Cardiac septum (tissue), 1 donor: ENCODE measurements at regions of chr11 and their contacts with region 1.

Region 1: DNA sequence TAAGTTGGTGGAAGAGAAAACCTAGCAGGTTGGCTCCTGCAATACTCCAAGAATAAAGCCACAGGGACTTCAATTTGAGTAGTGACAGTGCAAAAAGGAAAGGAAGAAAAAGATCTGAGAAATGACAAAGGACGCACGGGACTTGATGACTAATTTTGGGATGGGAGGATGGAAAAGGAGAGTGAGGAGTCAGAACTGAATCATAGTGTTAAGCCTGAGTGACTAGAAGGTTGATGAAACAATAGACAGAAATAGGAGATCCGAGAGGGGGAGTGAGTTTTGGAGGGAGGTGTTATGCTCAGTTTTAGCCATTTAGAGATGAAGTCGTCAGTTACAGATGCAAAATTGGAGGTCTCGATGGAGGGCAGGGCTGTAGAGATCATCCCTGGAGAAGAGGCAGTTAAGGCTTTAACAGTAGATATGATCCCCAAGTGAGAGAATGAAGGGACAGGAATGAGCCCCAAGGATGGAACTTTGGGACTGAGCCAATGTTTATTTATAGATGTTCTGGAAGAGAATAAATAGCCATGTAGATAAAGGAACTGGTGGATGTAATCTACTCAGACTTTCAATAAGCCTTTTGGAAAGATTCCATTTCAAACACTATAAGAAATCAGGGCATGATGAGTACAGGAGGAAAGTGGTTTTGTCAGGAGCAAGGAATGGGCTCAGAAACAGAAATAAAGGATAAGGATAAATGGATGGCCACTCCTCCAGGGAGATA is 108.9 kb upstream of the NCAM1 start:
- DNase-seq: no peak

Region 2: DNA sequence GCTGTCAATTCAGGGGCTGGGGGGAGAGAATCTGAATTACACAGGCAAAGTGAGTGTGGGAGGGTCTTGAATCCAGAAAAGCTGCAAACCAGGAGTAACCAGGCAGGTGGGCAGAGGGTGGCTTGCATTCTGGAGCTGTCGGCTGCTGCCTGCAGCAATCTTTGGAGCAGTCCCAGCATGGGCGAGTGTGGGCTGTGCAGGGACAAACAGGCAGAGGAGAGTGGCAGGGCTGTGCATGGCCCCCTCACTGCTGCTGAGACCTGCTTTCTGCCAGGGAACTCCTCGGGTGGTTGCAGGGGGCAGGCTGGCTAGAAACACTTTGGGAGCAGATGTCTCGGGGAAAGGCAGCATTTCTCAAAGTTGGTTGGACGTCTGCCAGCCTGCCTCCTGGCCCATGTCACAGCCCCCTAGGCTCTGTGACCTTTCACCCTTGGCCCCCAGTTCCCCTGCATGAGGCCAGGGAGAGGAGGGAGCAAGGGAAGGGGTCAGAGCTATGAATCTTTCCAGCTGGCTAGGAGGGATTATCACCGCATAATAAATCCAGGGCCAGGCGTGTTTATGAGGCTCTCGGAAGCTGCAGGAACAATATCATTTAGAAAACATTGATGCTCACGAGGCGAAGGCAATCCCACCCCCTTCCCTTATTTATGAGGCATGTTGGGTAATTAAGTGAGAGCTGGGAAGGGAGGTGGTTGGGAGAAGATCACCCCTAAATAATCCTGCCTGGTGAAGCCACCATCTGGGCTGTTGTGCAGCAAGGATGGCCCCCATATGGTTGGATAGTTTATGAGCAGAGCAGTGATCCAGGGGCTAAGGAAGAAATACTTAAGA is 103.4 kb before region 1 on chr11:
- intact Hi-C with region 1: no loop called
- DNase-seq: no peak

Region 3: DNA sequence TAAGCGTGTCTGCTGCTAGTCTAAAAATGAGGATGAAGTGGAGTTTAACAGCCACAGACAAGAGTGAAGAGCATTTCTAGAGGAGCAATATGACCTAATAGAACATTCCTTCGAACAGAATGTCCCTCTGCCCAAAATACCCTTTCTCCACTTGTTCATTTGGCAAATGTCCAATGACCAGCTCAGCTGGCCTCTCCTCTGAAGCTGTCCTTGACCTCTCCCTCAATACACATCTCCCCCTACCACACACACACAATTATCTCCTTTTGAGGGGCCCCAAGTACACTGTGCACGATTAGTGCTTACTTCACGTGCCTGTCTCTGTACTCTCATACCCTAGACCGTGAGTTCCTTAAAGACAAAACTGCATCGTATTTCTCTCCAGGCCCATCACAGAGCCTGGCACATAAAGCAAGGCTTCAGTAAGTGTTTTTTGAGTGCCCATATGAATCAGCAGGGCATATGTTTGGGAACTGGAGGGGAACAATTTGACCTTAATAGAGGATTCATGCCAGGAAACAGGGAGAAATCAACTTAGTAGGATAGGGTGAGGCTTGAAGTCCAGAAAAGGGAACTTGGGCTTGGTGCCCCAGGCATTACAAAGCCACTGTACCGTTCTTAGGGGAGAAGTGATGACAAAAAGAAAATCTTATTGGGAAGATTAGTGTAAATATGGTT is 90.8 kb after region 1 on chr11:
- intact Hi-C with region 1: loop called (anchors 5 kb)
- DNase-seq: no peak

Region 4: DNA sequence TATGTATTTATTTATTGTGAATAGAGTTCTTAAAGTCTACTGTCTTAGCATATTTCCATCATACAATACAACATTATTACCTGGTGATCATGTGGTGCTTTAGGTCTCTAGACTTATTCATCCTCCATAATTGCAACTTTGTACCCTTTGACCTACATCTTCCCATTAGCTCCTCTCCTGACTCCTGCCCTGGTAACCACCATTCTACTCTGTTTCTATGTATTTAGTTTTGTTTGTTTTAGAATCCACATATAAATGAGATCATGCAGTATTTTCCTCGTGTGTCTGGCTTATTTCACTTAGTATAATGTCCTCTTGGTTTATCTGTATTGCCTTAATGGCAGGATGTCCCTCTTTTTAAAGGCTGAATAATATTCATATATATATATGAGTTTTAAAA is 131.6 kb after region 1 on chr11:
- intact Hi-C with region 1: no loop called
- DNase-seq: no peak